Activated naive CD4-positive, alpha-beta T cell treated with anti-CD3 and anti-CD28 coated beads for 36 hours (primary cell): ENCODE measurements at regions of chr20 and their contacts with region 1.

Region 1: DNA sequence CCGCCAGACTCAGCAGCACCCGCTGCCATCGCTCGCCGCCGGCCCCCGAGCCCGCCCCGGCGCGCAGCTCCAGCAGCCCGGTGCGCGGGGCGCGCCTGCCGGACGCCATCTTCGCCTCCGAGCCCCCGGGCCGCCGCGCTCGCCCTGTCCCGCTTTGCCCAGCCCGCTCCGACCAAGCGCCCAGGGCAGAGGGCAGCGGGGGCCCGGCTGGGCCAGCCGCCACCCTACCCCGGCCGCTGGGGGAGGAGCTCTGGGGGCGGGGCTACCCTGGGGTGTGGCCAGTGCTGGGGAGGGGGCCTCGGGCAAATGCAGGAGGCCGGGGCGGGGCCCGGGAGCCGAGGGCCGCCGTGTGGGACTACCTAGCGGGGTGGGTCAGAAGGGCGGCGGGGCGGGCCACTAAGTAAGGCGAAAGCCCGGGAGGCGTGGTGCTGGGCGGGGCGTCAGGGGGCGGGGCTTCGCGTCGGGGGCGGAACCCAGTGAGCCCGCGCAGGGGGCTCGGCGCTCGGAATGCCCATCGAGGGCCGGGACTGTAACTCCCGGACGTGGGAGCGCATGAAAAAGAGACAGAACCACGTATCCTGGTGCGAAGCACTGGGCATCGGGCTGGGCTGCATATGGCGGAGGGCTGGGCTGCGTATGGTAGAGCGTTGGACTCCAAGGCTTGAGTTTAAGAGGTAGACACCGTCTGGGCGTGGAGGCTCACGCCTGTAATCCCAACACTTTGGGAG is at the start of gene SNTA1:
- DNase-seq: peak; percentile 88
- H3K4me3 Mint-ChIP-seq: peak within 1 kb of the TSS; percentile 84
- H3K27ac Mint-ChIP-seq: peak within 1 kb of the TSS; percentile 46
- H3K4me1 Mint-ChIP-seq: peaks cover 10% of the 10 kb centered on the region
- H3K27me3 Mint-ChIP-seq: no peaks in the 10 kb centered on the region
- total RNA-seq, gene SNTA1: 2.6 to 2.9 TPM

Region 2: GRCh38 chr20:33299111-33299603 is 144.5 kb before region 1 on chr20:
- CTCF ChIA-PET with region 1: no interaction called
- intact Hi-C with region 1: loop called (anchors 1 kb)
- DNase-seq: peak; percentile 76
- H3K4me3 Mint-ChIP-seq: no peak overlapping the region
- H3K27ac Mint-ChIP-seq: no peak overlapping the region
- H3K4me1 Mint-ChIP-seq: peaks cover 2% of the 10 kb centered on the region
- H3K27me3 Mint-ChIP-seq: peaks cover 1% of the 10 kb centered on the region

Region 3: DNA sequence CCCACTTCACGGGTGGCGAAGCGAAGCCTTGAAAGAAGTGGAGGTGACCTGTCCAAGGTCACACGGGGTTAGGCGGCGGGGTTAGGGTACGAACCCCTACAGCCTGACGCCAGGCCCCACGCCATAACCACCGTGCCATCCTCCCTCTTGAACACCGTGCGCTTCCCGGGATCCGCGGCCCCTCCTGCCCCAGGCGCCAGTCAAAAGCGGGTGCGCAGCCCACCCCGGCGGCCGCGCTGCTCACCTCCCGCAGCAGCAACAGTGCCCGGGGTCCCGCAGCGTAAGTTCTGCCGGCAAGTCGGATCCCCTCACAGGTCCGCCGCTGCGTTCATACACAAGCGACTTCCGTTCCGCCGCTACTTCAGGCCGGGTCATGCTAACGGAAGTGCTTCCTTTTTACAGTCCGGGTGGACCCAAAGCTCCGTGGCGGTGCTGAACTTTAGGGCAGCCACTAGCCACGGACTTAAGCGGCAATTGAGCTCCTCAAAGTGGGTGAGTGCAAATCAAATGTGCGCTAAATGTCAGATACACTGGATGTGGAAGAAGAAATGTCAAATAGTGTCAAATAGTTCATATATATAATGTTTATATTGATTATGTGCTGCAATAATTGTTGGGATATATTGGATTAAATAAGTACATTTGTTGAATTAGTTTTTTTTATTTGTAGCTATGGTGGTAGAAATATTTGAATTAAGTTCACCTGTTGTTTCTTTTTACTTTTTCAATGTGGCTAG is 42.3 kb before region 1 on chr20 and contains the start of gene CDK5RAP1:
- CTCF ChIA-PET with region 1: interaction called, 4 read pairs
- intact Hi-C with region 1: loop called (anchors 1 kb)
- DNase-seq: peak; percentile 92
- H3K4me3 Mint-ChIP-seq: peak within 1 kb of the TSS; percentile 94
- H3K27ac Mint-ChIP-seq: peak within 1 kb of the TSS; percentile 81
- H3K4me1 Mint-ChIP-seq: peaks cover 40% of the 10 kb centered on the region
- H3K27me3 Mint-ChIP-seq: no peaks in the 10 kb centered on the region
- total RNA-seq, gene CDK5RAP1: 42.4 to 43.0 TPM

Region 4: DNA sequence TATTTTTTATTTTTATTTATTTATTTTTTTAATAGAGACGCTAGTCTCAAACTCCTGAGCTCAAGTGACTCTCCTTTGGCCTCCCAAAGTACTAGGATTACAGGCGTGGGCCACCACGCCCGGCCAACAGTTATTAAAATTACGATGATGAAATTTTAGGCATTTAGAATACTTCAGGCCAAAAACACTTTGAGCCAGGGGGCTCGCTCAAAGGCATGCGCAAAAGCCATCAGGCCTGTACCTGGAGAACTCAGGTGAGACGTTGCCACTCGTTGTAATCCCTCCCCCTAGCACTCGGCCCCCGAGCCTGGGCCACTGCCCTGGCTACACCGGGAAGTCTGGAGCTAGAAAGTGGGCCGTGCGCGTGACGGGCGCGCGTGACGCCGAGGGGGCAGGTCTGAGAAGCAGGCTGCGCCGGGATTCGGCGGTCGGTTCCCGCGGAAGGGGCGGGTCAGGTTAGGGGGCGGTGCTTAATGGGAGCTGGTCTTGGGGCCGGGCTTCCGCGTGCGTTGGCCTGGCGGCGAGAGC is 45.9 kb after region 1 on chr20:
- CTCF ChIA-PET with region 1: interaction called, 5 read pairs
- intact Hi-C with region 1: loop called (anchors 1 kb)
- DNase-seq: peak; percentile 100
- H3K4me3 Mint-ChIP-seq: peak overlapping the region; percentile 79
- H3K27ac Mint-ChIP-seq: peak overlapping the region; percentile 81
- H3K4me1 Mint-ChIP-seq: peaks cover 17% of the 10 kb centered on the region
- H3K27me3 Mint-ChIP-seq: no peaks in the 10 kb centered on the region